Transverse colon (tissue), 4 donors: ENCODE measurements at regions of chr19 and their contacts with region 1.

Region 1: DNA sequence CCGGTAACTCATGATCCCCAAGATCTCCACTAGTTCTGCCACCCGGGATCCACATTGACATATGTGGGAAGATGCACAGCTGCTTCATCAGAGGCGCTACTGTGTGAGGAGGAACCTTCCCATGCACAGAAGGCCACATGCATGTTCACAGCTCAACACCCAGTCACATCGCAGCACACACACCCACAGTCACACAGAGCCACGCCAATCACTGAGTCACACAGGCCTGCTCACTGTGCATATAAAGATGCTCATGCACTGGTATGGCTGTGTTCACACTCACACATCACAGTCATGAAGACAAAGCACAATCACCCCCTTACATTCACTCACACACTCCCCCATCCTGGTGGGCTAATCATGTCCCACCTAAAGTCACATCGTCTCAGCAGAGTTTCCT is 9.8 kb downstream of the CLC start:
- DNase-seq: no peak
- H3K4me3 ChIP-seq: no peak overlapping the region
- H3K27ac ChIP-seq: no peak overlapping the region
- H3K4me1 ChIP-seq: no peaks in the 10 kb centered on the region
- H3K27me3 ChIP-seq: peaks cover 5% of the 10 kb centered on the region
- CTCF ChIP-seq: no peak
- EP300 ChIP-seq: no peak
- POLR2A ChIP-seq: no peak

Region 2: GRCh38 chr19:39692822-39693221 is 35.2 kb before region 1 on chr19:
- in situ Hi-C with region 1: no loop called
- intact Hi-C with region 1: loop called (anchors 1 kb)
- DNase-seq: no peak
- H3K4me3 ChIP-seq: no peak overlapping the region
- H3K27ac ChIP-seq: no peak overlapping the region
- H3K4me1 ChIP-seq: no peaks in the 10 kb centered on the region
- H3K27me3 ChIP-seq: peaks cover 23% of the 10 kb centered on the region
- CTCF ChIP-seq: no peak
- EP300 ChIP-seq: no peak
- POLR2A ChIP-seq: no peak

Region 3: DNA sequence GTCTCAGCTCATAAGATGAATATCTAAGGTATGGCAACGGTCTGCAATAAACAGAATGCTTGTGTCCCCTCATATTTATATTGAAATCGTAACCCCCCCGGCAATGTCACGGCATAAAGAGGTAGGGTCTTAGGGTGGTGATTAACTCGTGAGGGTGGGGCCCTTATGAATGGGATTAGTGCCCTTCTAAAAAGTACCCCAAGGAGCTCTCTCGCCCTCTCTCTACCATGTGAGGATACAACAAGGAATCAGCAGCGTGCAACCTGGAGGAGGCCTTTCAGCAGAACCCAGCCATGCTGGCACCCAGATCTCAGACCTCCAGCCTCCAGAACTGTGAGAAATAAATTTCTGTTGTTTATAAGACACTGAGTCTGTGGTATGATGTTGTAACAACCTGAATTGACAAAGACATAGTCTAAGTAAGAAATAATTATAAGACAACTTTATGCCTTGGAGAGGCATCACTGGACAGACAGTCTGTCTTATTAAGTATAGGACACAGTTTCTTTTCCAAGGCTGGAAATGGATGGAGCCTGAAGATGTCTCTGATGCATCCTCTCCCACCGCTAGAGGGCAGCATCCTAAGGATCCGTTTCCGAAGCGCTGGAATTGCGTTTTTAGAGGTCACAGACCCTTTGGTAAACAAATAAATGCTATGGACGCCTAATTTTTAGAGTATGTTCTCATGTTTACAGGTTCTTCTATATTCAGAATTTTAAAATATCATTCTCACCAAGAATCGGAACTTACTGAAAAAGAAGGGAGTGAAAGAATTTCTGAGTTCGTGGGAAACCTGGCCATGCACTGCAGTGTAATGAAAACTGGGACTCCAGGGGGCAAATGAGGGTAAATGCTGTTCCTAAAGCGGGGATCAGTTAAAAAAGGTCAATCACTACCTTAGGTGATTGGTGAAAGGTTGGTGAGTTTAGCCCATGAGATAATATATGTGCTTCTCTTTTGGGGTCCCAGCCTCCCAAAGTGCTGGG is 37.3 kb after region 1 on chr19:
- in situ Hi-C with region 1: no loop called
- intact Hi-C with region 1: no loop called
- DNase-seq: peak; percentile 28
- H3K4me3 ChIP-seq: no peak overlapping the region
- H3K27ac ChIP-seq: no peak overlapping the region
- H3K4me1 ChIP-seq: no peaks in the 10 kb centered on the region
- H3K27me3 ChIP-seq: peaks cover 9% of the 10 kb centered on the region
- CTCF ChIP-seq: peak; percentile 43 to 73 (median 70)
- EP300 ChIP-seq: no peak
- POLR2A ChIP-seq: no peak